Adrenal gland (tissue), 19 donors: ENCODE measurements at regions of chr4 and their contacts with region 1.

Region 1: GRCh38 chr4:158856852-158857251 is 88.0 kb downstream of the FNIP2 start:
- DNase-seq: no peak
- H3K4me3 ChIP-seq: no peak overlapping the region
- H3K27ac ChIP-seq: no peak overlapping the region
- H3K4me1 ChIP-seq: no peaks in the 10 kb centered on the region
- H3K27me3 ChIP-seq: no peaks in the 10 kb centered on the region
- CTCF ChIP-seq: peak in 5 of 6 experiments; percentile 49 to 64 (median 57)
- POLR2A ChIP-seq: no peak

Region 2: DNA sequence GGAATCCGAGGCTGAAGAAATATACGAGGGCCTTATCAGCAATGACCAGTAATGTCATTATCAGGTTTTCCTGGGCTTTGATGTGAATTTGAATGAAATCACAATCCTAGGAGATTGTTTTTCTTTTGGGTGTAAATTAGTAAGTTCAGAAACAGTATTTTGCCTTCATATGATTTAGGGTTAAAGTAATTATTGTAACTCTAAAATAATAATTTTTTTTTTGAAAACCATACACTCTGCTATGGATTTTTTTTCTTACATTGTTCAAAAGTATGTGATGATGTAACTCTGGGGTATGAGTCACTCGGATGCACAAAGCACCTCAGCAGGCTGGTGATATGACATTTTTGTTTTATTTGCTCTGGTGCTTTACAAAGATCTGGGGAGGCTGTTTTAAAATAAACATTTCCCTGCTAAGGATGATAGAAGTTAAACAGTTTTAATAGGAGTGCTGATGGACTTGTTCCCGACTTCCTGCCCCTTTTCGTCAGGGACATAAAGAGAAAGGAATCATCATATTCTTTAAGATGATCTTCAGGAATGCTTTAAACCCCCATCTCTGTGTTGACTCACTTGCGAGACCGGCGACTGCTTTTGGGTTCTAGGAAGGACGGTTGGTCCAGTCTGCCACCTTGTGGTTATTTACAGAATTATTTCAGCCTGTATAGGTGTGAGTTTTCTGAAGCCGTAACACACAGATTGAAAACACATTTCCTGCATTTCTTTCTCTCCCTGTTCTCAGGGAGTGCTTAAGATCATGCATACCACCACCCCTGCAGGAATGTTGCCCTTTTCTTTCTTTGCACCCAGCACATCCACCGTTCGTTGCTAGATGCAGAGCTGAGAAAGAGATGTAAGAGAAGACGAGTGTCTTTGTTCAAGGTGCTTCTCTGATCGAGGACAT is 318.5 kb after region 1 on chr4:
- intact Hi-C with region 1: loop called in 1 of 2 experiments (anchors 10 kb)
- DNase-seq: peak; percentile 56 to 82 (median 71)
- H3K4me3 ChIP-seq: peak overlapping the region in 1 of 4 donors; percentile 3
- H3K27ac ChIP-seq: no peak overlapping the region
- H3K4me1 ChIP-seq: peaks cover 0 to 19% of the 10 kb centered on the region in 2 donors
- H3K27me3 ChIP-seq: no peaks in the 10 kb centered on the region
- CTCF ChIP-seq: peak; percentile 78 to 91 (median 86)
- POLR2A ChIP-seq: no peak

Region 3: DNA sequence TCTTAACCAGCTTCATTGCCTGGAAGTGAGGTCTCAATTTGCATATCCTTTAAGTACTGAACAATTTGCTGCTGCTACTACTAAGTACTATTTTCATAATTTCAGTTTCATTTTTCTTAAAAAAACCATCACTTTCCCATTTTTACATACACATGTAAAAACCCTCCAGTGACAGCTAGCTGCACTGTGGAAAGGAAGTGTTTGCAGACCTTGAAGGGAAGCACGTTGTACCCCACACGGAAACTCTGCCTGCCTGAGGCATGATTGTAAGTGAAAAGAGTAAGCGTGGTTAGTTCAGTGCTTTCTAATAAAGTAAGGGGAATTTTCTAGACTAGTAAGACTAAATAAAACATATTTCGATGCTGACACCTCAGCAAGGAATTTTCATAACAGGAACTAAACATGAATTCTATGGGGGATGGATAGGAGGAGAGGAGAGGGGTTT is 349.6 kb after region 1 on chr4:
- intact Hi-C with region 1: loop called (anchors 10 kb)
- DNase-seq: no peak
- H3K4me3 ChIP-seq: no peak overlapping the region
- H3K27ac ChIP-seq: no peak overlapping the region
- H3K4me1 ChIP-seq: no peaks in the 10 kb centered on the region
- H3K27me3 ChIP-seq: no peaks in the 10 kb centered on the region
- CTCF ChIP-seq: no peak
- POLR2A ChIP-seq: no peak

Region 4: GRCh38 chr4:159446266-159446976 is 589.6 kb after region 1 on chr4:
- intact Hi-C with region 1: loop called in 1 of 2 experiments (anchors 10 kb)
- DNase-seq: peak; percentile 32 to 71 (median 48)
- H3K4me3 ChIP-seq: no peak overlapping the region
- H3K27ac ChIP-seq: no peak overlapping the region
- H3K4me1 ChIP-seq: no peaks in the 10 kb centered on the region
- H3K27me3 ChIP-seq: no peaks in the 10 kb centered on the region
- CTCF ChIP-seq: peak; percentile 74 to 87 (median 82)
- POLR2A ChIP-seq: no peak